Activated CD8-positive, alpha-beta T cell treated with anti-CD3 and anti-CD28 coated beads for 36 hours (primary cell): ENCODE measurements at regions of chr16 and their contacts with region 1.

Region 1: DNA sequence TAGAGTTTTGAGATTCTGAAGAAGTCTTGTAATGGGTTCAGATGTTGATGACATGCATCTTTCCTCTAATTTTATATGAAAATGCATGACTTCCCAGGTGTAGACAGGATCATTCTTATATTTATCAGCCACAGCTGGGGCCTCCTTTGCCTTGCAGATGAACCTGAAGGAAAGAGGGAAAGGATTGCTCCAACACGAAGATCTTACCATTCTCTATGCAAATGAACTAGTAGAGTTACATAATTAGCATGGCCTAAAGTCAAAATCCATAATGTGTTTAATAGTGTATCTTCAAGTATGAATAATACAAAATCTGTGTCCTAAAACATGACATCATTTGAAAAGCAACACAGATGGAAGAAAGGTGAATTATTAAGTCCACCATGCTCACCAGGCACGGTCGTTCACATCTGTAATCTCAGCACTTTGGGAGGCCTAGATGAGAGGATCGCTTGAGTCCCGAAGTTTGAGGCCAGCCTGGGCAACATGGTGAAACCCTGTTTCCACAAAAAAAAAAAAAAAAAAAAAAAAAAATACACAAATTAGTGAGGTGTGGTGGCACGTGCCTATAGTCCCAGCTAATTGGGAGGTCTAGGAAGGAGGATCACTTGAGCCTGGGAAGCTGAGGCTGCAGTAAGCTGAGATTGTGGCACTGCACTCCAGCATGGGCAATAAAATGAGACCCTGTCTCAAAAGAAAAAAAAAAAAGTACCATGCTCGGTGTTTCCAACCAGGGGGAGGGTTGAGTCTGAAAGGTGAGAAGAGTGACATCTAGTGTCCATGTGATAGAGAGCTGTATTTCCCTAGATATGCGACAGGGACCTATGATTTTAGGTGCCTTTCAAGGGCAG is 6.3 kb downstream of the VWA3A start:
- DNase-seq: peak; percentile 11
- ATAC-seq: peak; percentile 95
- H3K4me3 Mint-ChIP-seq: no peak overlapping the region
- H3K27ac Mint-ChIP-seq: no peak overlapping the region
- H3K4me1 Mint-ChIP-seq: no peaks in the 10 kb centered on the region
- H3K27me3 Mint-ChIP-seq: peaks cover 13% of the 10 kb centered on the region
- CTCF ChIP-seq: peak; percentile 62

Region 2: DNA sequence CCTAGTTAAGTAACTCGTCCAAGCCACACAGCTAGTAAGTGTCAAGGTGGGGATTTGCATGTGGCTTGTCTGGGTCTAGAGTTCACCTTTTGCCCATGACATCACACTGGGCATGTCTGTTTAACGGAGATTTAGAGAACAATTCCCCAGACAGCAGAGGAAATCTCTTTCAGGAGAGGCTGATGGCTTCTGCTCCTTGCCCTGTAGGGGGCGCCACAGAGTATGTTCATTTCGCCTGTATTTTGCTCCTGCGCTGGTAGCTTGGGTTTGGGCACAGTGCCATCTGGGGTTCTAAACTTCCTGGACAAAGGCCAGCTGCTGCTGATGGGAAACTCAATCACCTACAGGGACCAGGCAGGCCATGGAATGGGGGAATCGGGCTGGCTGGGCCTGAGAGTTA is 414.4 kb before region 1 on chr16:
- CTCF ChIA-PET with region 1: no interaction called
- POLR2A ChIA-PET with region 1: no interaction called
- intact Hi-C with region 1: no loop called
- DNase-seq: peak; percentile 56
- ATAC-seq: no peak
- H3K4me3 Mint-ChIP-seq: no peak overlapping the region
- H3K27ac Mint-ChIP-seq: no peak overlapping the region
- H3K4me1 Mint-ChIP-seq: no peaks in the 10 kb centered on the region
- H3K27me3 Mint-ChIP-seq: peaks cover under 1% of the 10 kb centered on the region
- CTCF ChIP-seq: peak; percentile 84

Region 3: DNA sequence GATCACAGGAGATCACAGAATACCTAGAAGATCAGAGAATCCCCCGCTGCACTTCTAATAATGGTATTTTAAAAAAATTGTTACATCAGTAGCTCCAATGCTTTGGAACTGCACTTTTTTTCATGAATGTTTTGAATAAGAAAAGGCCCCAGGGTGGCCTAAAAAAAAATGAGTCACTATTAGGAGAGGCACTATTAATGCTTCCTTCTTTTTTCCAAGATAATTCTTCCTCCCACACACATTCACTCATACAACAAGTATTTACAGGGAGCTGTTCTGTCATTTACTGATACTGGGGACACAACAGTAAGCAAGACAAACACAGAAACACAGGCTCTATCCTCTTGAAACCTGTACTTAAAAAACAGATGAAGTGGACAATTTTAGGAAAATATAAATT is 97.0 kb before region 1 on chr16:
- CTCF ChIA-PET with region 1: interaction called, 14 read pairs
- POLR2A ChIA-PET with region 1: no interaction called
- intact Hi-C with region 1: loop called (anchors 5 kb)
- DNase-seq: no peak
- ATAC-seq: no peak
- H3K4me3 Mint-ChIP-seq: peak overlapping the region; percentile 31
- H3K27ac Mint-ChIP-seq: no peak overlapping the region
- H3K4me1 Mint-ChIP-seq: peaks cover 10% of the 10 kb centered on the region
- H3K27me3 Mint-ChIP-seq: no peaks in the 10 kb centered on the region
- CTCF ChIP-seq: no peak

Region 4: GRCh38 chr16:22007509-22008214 is 91.0 kb before region 1 on chr16 and contains the start of gene MOSMO:
- CTCF ChIA-PET with region 1: interaction called, 14 read pairs
- POLR2A ChIA-PET with region 1: no interaction called
- intact Hi-C with region 1: loop called (anchors 5 kb)
- DNase-seq: peak; percentile 63
- ATAC-seq: peak; percentile 81
- H3K4me3 Mint-ChIP-seq: peak within 1 kb of the TSS; percentile 86
- H3K27ac Mint-ChIP-seq: peak within 1 kb of the TSS; percentile 82
- H3K4me1 Mint-ChIP-seq: peaks cover 42% of the 10 kb centered on the region
- H3K27me3 Mint-ChIP-seq: no peaks in the 10 kb centered on the region
- CTCF ChIP-seq: no peak
- total RNA-seq, gene MOSMO: 5.4 to 7.0 TPM

Region 5: DNA sequence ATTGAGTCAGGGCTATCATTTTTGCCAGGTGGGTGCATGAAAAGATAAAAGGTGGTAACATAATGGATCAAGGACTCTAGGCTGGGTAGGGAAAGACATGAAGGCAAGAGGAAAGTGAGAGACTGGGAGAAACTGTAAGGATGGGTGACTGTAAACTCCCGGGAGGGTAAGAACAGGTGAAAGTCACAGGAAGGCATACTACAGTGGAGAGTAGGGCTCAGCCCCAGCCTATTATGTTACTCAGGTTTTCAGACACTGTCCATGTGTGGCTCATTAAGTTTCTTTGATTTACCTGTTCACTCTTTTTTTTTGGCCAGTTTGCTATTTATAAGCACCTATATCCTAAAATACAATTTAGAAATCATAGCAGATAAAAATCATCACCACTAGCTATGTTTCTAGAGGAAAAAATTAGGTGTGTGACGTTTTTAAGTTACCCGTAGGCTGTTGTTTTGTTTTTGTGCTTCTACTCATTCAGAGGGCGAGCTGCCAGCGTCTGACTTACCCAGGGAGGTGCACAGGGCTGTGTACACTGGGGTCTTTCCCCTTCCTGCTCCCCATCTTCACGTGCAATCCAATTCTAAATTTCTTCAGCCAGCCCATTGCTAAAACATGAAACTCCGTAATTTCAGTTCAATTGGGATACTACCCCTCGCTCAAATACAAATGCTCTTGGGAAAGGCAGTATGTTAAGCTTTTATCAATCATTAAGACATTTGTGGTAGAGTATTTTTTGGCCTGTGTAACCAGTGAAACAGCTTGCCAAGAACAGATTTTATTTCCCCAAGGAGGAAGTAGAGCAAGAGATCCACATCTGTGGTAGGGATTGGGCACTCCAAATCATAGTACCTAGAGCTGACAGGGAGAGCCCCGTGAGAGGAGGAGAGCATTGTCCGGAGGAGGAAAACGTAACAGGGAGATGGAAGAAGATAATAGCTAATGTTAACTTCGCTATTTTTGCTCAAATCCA is 28.0 kb before region 1 on chr16:
- CTCF ChIA-PET with region 1: interaction called, 11 read pairs
- POLR2A ChIA-PET with region 1: interaction called, 3 read pairs
- intact Hi-C with region 1: no loop called
- DNase-seq: no peak
- ATAC-seq: no peak
- H3K4me3 Mint-ChIP-seq: no peak overlapping the region
- H3K27ac Mint-ChIP-seq: no peak overlapping the region
- H3K4me1 Mint-ChIP-seq: peaks cover 1% of the 10 kb centered on the region
- H3K27me3 Mint-ChIP-seq: no peaks in the 10 kb centered on the region
- CTCF ChIP-seq: no peak

Region 6: DNA sequence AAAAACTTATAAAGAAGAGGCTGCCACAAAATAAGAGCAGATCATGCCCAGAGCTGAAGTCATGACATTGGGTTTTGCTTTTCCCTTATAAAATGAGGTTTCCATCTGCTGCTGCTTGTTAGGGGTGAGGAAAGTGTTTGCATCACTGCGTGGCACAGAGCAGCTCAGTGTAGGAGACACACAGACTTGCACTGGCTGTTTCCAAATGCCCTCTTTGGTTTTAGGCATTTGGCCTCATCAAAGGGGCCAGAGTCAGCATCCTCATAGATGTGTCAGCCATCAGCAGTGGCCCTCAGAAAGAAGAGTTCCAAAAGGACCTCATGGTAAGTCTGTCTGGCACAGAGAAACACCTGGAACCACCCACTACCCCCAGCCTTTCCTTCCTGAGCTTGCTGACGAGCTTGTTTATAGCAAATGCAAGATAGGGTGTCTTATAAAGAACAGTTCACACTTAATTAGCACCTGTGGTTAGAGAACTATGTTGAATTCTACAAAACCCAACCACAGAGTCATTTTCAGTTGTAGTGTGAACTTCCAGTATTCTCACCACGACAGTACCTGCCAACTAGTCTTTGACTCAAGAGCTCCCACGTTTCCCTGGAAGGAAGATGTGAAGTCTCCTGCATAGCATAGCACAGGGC is 10.7 kb after region 1 on chr16:
- CTCF ChIA-PET with region 1: interaction called, 17 read pairs
- POLR2A ChIA-PET with region 1: no interaction called
- intact Hi-C with region 1: no loop called
- DNase-seq: no peak
- ATAC-seq: no peak
- H3K4me3 Mint-ChIP-seq: no peak overlapping the region
- H3K27ac Mint-ChIP-seq: no peak overlapping the region
- H3K4me1 Mint-ChIP-seq: peaks cover 8% of the 10 kb centered on the region
- H3K27me3 Mint-ChIP-seq: no peaks in the 10 kb centered on the region
- CTCF ChIP-seq: no peak

Region 7: GRCh38 chr16:22117609-22118008 is 19.0 kb after region 1 on chr16:
- CTCF ChIA-PET with region 1: interaction called, 11 read pairs
- POLR2A ChIA-PET with region 1: no interaction called
- intact Hi-C with region 1: no loop called
- DNase-seq: no peak
- ATAC-seq: no peak
- H3K4me3 Mint-ChIP-seq: no peak overlapping the region
- H3K27ac Mint-ChIP-seq: no peak overlapping the region
- H3K4me1 Mint-ChIP-seq: no peaks in the 10 kb centered on the region
- H3K27me3 Mint-ChIP-seq: no peaks in the 10 kb centered on the region
- CTCF ChIP-seq: no peak

Region 8: GRCh38 chr16:22260490-22260889 is 161.9 kb after region 1 on chr16:
- CTCF ChIA-PET with region 1: no interaction called
- POLR2A ChIA-PET with region 1: no interaction called
- intact Hi-C with region 1: no loop called
- DNase-seq: no peak
- ATAC-seq: no peak
- H3K4me3 Mint-ChIP-seq: no peak overlapping the region
- H3K27ac Mint-ChIP-seq: no peak overlapping the region
- H3K4me1 Mint-ChIP-seq: peaks cover 18% of the 10 kb centered on the region
- H3K27me3 Mint-ChIP-seq: no peaks in the 10 kb centered on the region
- CTCF ChIP-seq: no peak